Right ventricle myocardium superior (tissue), 1 donor: ENCODE measurements at regions of chr11 and their contacts with region 1.

Region 1: GRCh38 chr11:69881449-69882269 is 62.4 kb upstream of the FGF3 start:
- DNase-seq: no peak
- ATAC-seq: no peak

Region 2: GRCh38 chr11:69704508-69705253 is 177.0 kb before region 1 on chr11:
- intact Hi-C with region 1: loop called (anchors 5 kb)
- DNase-seq: no peak
- ATAC-seq: peak; percentile 54

Region 3: DNA sequence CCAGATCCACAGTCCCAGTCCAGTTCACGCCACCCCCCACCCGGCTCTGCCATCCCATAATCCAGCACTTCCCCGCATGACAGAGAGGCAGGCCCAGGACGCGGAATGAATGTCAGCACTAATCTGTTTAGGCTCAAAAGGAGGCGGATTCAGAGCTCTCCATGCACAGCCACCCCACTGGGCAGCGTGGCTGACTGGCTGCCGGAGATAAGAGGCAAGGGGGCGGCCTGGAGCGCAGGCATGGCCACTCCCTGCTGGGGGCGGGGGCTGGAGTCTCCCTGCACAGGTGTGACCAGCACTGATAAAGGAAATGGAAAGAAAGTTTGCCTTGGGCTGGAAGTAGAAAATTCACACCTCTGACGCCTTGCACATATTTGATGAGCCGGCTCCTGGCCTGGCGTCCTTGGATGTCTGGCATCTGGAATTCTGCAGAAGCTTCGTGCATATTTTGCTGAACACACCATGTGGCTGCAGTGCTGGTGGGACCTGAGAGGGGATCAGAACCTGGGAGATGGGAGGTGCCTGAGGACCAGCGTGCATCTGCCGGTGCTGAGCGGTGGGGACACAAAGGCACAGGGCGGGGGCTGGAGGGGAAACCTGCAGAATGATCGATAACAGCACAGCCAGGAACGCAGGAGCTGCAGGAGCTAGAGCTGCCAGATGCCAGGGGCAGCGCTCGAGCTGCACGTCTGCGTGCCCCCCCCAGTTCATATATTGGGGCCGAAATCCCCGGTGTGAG is 861.1 kb after region 1 on chr11:
- intact Hi-C with region 1: no loop called
- DNase-seq: no peak
- ATAC-seq: no peak